ENCODE measurements at regions of chr18 and their contacts with region 1.

Region 1: DNA sequence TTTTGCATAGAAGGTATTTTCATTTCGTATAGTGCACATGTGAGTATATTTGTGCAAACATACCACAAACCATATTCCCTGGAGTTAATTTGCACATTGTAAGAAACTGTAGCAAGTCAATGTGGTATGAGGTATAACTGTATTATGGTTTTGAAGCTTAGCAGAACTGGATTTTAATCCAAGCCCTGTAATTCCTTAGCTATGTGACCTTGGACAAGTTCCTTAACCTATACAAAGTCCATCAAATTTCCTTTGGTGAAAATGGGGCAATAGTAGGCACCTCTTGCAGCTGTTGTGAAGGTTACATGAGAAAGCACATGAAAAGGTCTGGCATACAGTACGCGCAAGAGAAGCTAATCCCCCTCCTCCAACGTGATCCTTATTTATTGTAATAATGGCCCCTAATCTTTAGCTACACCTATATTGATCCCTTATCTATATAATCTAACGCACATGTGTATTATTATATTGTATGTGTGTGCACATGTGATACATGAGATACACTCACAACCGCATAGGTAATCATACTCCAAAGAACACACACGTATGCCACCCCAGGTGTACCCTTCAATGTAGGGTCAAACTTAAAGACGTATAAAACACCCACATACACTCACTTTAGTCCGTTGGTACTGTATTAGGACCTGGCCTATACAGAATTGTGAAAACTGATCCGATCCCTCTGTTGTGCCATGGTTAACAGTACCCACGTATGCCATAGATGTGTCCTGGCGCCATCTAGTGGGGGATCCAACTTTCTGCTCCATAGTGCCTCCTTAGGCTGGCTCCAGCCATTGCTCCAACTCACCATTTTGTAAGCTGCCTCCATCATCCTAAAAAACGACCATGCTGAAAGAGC is 402.9 kb upstream of the SLC14A2 start:
- DNase-seq: peak; percentile 89
- ATAC-seq: peak; percentile 95
- H3K4me3 Mint-ChIP-seq: no peak overlapping the region
- H3K27ac Mint-ChIP-seq: no peak overlapping the region
- H3K4me1 Mint-ChIP-seq: no peaks in the 10 kb centered on the region
- H3K27me3 Mint-ChIP-seq: peaks cover 2% of the 10 kb centered on the region
- CTCF ChIP-seq: peak; percentile 93

Region 2: DNA sequence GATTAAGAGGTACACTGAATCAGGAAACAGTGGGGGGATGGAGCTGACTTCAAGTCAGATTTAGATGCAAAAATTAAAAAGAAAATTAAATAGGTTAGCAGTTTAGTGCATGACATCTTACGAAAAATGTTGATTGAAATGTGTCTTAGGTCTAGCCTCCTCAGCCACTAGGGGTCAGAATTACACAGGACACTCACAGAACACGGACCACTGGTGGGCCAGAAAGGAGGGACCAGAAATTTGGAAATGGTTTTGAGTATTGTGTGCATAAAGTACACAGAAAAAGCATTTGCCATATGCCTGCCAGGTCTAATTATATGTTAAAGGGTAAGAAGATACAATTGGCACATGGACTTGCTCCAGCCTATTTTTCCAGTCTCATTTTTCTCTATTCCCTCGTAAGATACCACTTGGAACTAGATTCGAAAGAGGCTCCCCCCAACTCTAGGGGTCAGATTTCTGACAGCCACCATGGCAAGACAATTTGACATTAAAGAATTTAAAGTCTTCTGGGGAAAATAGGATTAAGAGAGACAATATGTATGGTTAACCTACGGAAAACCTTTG is 1082.0 kb before region 1 on chr18:
- CTCF ChIA-PET with region 1: interaction called, 4 read pairs
- POLR2A ChIA-PET with region 1: no interaction called
- intact Hi-C with region 1: loop called (anchors 10 kb)
- DNase-seq: peak; percentile 11
- ATAC-seq: peak; percentile 62
- H3K4me3 Mint-ChIP-seq: no peak overlapping the region
- H3K27ac Mint-ChIP-seq: no peak overlapping the region
- H3K4me1 Mint-ChIP-seq: no peaks in the 10 kb centered on the region
- H3K27me3 Mint-ChIP-seq: no peaks in the 10 kb centered on the region
- CTCF ChIP-seq: peak; percentile 62

Region 3: DNA sequence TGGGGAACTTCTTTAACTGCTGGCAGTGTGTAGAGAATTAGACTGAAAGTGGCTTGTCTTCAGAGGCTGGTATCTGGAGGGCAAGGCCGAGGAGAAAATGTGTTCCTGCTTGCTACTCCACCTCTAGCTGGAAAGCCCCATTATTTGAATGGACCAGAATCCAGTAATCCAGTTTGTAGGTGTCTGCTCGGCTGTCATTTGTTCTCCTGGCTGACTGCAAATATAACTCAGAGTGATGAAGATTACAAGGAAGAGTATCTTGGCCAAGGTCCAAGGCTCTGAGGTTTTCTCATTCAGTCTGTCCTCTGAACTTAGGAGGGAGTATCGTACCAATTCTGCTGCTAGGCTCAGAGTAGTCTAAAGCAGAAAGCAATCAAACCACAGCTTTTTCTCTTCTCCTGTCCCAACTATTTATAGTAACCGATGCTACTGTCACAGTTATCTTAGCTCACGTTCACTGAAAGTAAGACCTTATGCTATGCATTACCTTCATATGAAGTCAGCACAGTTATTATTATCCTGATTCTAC is 303.2 kb before region 1 on chr18:
- CTCF ChIA-PET with region 1: interaction called, 3 read pairs
- POLR2A ChIA-PET with region 1: no interaction called
- intact Hi-C with region 1: loop called (anchors 10 kb)
- DNase-seq: peak; percentile 16
- ATAC-seq: no peak
- H3K4me3 Mint-ChIP-seq: no peak overlapping the region
- H3K27ac Mint-ChIP-seq: no peak overlapping the region
- H3K4me1 Mint-ChIP-seq: peaks cover 29% of the 10 kb centered on the region
- H3K27me3 Mint-ChIP-seq: peaks cover 21% of the 10 kb centered on the region
- CTCF ChIP-seq: no peak

Region 4: GRCh38 chr18:45071956-45072355 is 140.5 kb before region 1 on chr18:
- CTCF ChIA-PET with region 1: no interaction called
- POLR2A ChIA-PET with region 1: no interaction called
- intact Hi-C with region 1: no loop called
- DNase-seq: no peak
- ATAC-seq: no peak
- H3K4me3 Mint-ChIP-seq: no peak overlapping the region
- H3K27ac Mint-ChIP-seq: no peak overlapping the region
- H3K4me1 Mint-ChIP-seq: no peaks in the 10 kb centered on the region
- H3K27me3 Mint-ChIP-seq: peaks cover 2% of the 10 kb centered on the region
- CTCF ChIP-seq: no peak

Region 5: DNA sequence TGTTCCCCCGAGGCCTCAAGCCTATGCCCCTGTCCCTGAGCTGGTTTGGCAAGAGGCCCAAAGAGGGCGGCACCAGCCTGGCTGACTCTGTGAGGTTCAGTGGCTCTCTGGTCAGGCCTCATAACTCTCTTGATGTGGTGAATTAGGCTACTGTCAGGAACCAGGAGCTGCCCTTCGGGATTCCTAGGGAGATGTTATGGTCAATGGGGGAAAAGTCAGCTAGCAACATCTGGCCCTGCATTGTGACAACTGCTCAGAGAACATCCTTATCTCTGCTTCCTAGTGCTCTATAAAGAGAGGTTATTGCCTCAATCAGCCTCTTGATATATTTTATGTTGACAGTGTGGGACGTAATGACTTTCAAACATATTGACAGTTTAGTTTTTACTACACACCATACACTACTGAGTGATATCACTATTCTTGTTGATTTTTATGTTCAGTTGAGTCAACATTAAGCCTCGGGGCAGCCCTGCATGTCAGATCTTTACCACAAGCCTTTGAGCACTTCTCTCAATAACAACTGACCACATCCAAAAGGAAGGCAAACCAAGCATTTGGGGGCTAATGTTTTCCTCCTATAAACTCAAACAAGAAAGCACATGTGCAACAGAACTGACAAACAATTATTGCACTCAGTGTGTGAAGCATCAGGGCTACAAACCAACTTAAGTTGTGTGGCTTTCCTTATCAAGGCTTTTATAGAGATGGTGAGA is 45.4 kb before region 1 on chr18:
- CTCF ChIA-PET with region 1: no interaction called
- POLR2A ChIA-PET with region 1: no interaction called
- intact Hi-C with region 1: no loop called
- DNase-seq: no peak
- ATAC-seq: no peak
- H3K4me3 Mint-ChIP-seq: no peak overlapping the region
- H3K27ac Mint-ChIP-seq: no peak overlapping the region
- H3K4me1 Mint-ChIP-seq: no peaks in the 10 kb centered on the region
- H3K27me3 Mint-ChIP-seq: no peaks in the 10 kb centered on the region
- CTCF ChIP-seq: no peak

Region 6: GRCh38 chr18:45197526-45197970 is 14.9 kb before region 1 on chr18:
- CTCF ChIA-PET with region 1: interaction called, 20 read pairs
- POLR2A ChIA-PET with region 1: no interaction called
- intact Hi-C with region 1: no loop called
- DNase-seq: peak; percentile 25
- ATAC-seq: peak; percentile 84
- H3K4me3 Mint-ChIP-seq: no peak overlapping the region
- H3K27ac Mint-ChIP-seq: no peak overlapping the region
- H3K4me1 Mint-ChIP-seq: no peaks in the 10 kb centered on the region
- H3K27me3 Mint-ChIP-seq: peaks cover 6% of the 10 kb centered on the region
- CTCF ChIP-seq: no peak

Region 7: DNA sequence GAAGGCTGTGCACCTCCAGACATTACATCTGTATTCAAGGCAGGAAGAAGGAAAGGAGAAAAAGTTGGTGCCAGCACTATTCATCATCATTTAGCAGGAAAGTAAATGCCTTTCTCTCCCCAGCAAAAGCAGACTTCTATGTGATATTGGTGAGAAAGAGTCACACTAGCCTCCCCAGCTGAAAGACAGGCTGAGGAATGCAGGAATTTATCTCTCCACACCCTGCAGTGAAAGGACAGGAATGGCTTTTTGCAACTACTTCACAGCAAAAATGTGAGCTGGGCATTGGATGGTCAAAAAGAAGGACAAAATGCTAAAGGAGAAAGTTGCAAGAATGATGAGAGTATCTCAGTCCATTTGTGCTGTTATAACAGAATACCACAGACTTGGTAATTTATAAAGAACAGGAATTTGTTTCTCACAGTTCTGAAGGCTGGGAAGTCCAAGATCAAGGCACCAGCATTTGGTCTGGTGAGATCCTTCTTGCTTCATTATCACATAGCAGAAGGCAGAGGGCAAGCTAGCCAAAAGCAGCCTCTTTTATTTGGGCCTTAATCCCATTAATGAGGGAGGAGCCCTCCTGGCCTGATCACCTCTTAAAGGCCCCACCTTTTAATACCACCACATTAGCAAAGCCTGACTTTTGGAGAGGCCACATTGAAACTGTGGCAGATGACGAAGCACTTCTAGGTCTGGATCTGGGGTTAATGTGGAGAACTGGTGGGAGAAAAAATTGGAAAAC is 14.8 kb after region 1 on chr18:
- CTCF ChIA-PET with region 1: interaction called, 23 read pairs
- POLR2A ChIA-PET with region 1: no interaction called
- intact Hi-C with region 1: no loop called
- DNase-seq: no peak
- ATAC-seq: no peak
- H3K4me3 Mint-ChIP-seq: no peak overlapping the region
- H3K27ac Mint-ChIP-seq: no peak overlapping the region
- H3K4me1 Mint-ChIP-seq: no peaks in the 10 kb centered on the region
- H3K27me3 Mint-ChIP-seq: peaks cover 3% of the 10 kb centered on the region
- CTCF ChIP-seq: no peak

Region 8: DNA sequence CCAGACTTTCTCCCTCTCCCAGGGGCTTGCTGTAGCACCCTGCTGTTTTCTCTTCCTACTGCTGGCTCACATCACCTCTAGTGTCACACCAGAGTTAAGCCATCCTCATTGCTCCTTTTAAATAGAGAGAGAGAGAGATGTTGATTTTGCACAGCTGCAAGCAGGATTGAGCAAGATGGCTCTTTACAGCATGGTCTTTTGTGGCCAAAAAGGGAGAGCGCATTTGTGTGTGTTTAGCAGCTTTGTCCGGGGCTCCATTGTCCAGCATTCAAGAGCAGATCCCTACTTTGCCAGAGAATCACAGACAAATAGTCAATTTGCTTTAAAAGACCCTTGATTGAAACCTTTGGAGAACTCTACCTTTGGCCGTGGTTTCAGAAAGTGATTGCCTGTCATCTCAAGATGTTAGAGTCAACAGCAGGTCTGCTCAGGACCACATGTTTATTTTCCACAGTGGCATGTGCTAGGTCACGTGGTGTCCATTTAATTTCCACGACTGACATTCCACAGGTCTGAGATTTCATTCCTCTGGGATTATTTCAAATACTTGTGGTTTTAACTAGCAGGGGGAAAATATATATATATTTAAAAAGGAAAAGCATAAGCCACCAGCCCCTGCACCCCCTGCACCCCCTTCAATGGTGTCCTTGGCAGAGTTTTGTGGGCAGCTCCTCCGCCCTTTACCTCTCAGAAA is 42.9 kb after region 1 on chr18:
- CTCF ChIA-PET with region 1: no interaction called
- POLR2A ChIA-PET with region 1: no interaction called
- intact Hi-C with region 1: no loop called
- DNase-seq: no peak
- ATAC-seq: no peak
- H3K4me3 Mint-ChIP-seq: no peak overlapping the region
- H3K27ac Mint-ChIP-seq: no peak overlapping the region
- H3K4me1 Mint-ChIP-seq: no peaks in the 10 kb centered on the region
- H3K27me3 Mint-ChIP-seq: peaks cover 3% of the 10 kb centered on the region
- CTCF ChIP-seq: no peak

Region 9: DNA sequence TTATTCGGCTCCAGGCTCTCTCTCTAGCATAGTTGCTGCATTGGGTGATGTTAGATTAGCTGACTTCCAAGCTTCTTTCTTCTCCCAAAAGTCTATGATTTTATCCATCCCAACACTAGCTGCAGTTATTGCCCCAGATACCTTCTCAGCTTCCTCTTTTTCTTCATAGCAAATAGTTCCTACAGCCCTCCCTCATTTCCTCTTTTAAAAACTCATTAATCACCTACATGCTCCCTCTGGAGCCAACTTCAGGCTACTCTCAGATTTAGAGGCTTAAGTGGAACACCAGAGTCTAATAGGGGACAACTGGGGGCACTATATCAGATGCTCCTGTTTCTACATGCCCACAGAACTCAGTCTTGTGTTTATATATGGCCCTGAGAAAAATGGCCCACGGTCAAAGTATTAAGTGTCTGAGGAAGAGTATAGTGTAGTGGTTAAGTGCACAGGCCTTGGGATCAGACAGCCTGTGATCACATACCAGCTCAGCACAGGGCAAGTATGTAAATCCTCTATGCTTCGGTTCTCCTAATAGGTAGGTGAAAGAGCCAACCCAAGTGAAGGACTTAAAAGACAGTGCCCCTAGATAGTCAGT is 161.0 kb after region 1 on chr18:
- CTCF ChIA-PET with region 1: no interaction called
- POLR2A ChIA-PET with region 1: no interaction called
- intact Hi-C with region 1: no loop called
- DNase-seq: no peak
- ATAC-seq: no peak
- H3K4me3 Mint-ChIP-seq: no peak overlapping the region
- H3K27ac Mint-ChIP-seq: no peak overlapping the region
- H3K4me1 Mint-ChIP-seq: no peaks in the 10 kb centered on the region
- H3K27me3 Mint-ChIP-seq: peaks cover 12% of the 10 kb centered on the region
- CTCF ChIP-seq: no peak

Measured in activated CD8-positive, alpha-beta T cell treated with anti-CD3 and anti-CD28 coated beads for 36 hours (primary cell).